ENCODE measurements at regions of chr12 and their contacts with region 1.

Region 1: GRCh38 chr12:111396726-111397445 is 8.8 kb upstream of the SH2B3 start:
- DNase-seq: peak; percentile 80 to 86
- H3K4me3 ChIP-seq: no peak overlapping the region
- H3K27ac ChIP-seq: peak overlapping the region in 2 of 3 donors; percentile 3 to 28
- H3K4me1 ChIP-seq: peaks cover 0 to 7% of the 10 kb centered on the region in 2 donors
- H3K27me3 ChIP-seq: no peaks in the 10 kb centered on the region
- CTCF ChIP-seq: peak in 5 of 6 experiments; percentile 94 to 99 (median 98)
- POLR2A ChIP-seq: no peak

Region 2: DNA sequence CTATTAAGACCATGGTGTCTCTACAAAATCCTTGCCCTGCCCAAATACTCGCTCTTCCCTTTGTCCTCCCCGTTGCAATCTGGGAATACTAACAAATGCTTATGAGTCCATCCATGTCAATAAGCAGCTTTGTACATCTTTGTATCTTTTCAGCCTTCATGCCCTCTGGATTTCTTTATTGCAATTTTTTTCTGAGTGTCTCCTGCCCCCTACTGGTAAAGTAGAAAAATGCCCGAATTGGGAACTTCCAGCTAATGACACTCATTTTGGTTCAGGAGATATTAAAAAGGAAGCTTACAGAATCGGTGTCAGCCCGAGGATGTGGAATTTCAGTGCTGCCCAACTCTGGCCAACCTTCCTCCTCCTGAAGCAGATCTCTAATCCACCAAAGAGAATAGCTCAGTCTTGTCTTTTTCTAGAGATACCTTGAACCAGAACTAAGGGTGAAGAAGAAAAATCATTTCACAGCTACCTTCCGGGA is 54.8 kb after region 1 on chr12:
- intact Hi-C with region 1: loop called (anchors 2 kb)
- DNase-seq: no peak
- H3K4me3 ChIP-seq: no peak overlapping the region
- H3K27ac ChIP-seq: no peak overlapping the region
- H3K4me1 ChIP-seq: peaks cover 5 to 35% of the 10 kb centered on the region in 2 donors
- H3K27me3 ChIP-seq: no peaks in the 10 kb centered on the region
- CTCF ChIP-seq: peak; percentile 59 to 74 (median 67)
- POLR2A ChIP-seq: no peak